ENCODE measurements at regions of chr16 and their contacts with region 1.

Region 1: GRCh38 chr16:30997887-30998711 is 12.3 kb downstream of the STX1B start:
- DNase-seq: peak; percentile 47
- H3K4me3 ChIP-seq: peak overlapping the region; percentile 47
- H3K27me3 ChIP-seq: no peaks in the 10 kb centered on the region
- CTCF ChIP-seq: no peak

Region 2: GRCh38 chr16:30927789-30928378 is 70.2 kb before region 1 on chr16:
- CTCF ChIA-PET with region 1: no interaction called
- POLR2A ChIA-PET with region 1: no interaction called
- DNase-seq: no peak
- H3K4me3 ChIP-seq: no peak overlapping the region
- H3K27me3 ChIP-seq: no peaks in the 10 kb centered on the region
- CTCF ChIP-seq: no peak

Region 3: GRCh38 chr16:31016018-31016417 is 17.9 kb after region 1 on chr16:
- CTCF ChIA-PET with region 1: no interaction called
- POLR2A ChIA-PET with region 1: no interaction called
- DNase-seq: no peak
- H3K4me3 ChIP-seq: no peak overlapping the region
- H3K27me3 ChIP-seq: 0 out of 2 replicates have a peak, but pooled peaks cover 2% of the 10 kb centered on the region
- CTCF ChIP-seq: no peak

Region 4: DNA sequence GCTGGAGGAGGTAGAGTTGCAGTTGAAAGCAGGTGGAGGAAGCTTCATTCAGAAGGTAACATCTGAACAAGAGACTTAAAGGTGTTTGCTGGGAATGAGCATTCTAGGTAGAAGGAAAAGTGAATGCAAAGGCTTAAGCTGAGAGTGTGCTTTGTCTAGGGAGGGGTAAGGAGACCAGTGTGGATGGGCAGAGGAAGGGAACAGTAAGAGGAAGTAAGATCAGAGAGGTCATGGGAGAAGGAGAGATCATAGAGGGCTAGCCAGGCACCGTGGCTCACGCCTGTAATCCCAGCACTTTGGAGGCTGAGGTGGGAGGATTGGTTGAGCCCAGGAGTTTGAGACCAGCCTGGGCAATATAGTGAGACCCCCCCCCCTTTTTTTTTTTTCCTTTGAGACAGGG is 38.6 kb after region 1 on chr16:
- CTCF ChIA-PET with region 1: no interaction called
- POLR2A ChIA-PET with region 1: interaction called, 11 read pairs
- DNase-seq: no peak
- H3K4me3 ChIP-seq: no peak overlapping the region
- H3K27me3 ChIP-seq: no peaks in the 10 kb centered on the region
- CTCF ChIP-seq: no peak

Region 5: DNA sequence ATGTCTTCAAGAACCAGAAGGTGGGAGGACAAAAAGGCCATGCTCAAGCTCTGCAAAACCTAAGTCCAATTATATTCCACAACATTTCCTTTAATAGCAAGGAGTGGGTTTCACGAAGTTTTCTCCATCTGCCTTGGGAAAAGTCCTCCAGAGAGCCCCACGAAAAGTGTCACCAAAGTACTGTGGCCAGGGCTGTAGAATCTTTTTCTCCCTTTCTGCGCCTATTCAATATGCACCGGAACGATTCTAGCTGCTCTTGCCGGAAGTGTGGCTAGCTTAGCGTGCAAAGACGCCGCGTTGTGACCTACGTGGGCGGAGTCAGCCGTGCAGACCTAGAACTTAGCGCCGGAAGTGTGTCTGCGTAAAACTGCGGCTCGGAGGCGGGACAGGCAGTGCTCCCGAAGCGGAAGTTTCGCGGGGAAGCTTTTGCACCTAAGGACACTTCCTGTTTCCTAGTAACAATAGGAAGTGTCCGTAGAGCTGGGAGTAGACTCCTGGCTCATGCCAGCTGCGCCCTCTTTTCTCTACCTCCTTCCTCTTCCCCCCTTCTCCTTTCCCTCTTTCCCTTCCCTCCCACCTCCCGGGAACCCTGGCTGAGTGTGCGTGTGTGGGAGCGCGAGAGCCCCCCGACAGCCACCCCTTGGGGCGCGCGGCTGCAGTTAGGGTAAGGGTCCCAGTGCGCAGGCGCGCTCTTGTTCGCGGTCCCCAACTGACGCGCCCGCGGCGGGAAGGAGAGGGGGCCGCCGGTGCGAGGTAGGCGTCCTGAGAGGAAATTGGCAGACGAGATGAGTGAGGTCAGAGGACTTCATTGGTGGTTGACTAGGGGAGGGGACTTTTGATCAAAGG is 76.1 kb after region 1 on chr16 and contains the starts of genes ZNF646 and ZNF668:
- CTCF ChIA-PET with region 1: no interaction called
- POLR2A ChIA-PET with region 1: interaction called, 11 read pairs
- DNase-seq: peak; percentile 94
- H3K4me3 ChIP-seq: peak within 1 kb of the TSS; percentile 81
- H3K27me3 ChIP-seq: no peaks in the 10 kb centered on the region
- CTCF ChIP-seq: no peak
- polyA plus RNA-seq, gene ZNF646: 3.3 and 4.2 TPM in 2 replicates
- polyA plus RNA-seq, gene ZNF668: 10.2 and 16.3 TPM in 2 replicates